Sciatic nerve (tissue), 2 donors: ENCODE measurements at regions of chr2 and their contacts with region 1.

Region 1: GRCh38 chr2:101697124-101698013 is at the start of gene MAP4K4:
- DNase-seq: peak; percentile 92
- ATAC-seq: peak; percentile 92
- total RNA-seq, gene MAP4K4: 140 TPM

Region 2: GRCh38 chr2:101630224-101630949 is 67.0 kb before region 1 on chr2:
- intact Hi-C with region 1: no loop called
- DNase-seq: no peak
- ATAC-seq: no peak

Region 3: GRCh38 chr2:101746388-101746723 is 49.0 kb after region 1 on chr2:
- intact Hi-C with region 1: no loop called
- DNase-seq: no peak
- ATAC-seq: no peak

Region 4: DNA sequence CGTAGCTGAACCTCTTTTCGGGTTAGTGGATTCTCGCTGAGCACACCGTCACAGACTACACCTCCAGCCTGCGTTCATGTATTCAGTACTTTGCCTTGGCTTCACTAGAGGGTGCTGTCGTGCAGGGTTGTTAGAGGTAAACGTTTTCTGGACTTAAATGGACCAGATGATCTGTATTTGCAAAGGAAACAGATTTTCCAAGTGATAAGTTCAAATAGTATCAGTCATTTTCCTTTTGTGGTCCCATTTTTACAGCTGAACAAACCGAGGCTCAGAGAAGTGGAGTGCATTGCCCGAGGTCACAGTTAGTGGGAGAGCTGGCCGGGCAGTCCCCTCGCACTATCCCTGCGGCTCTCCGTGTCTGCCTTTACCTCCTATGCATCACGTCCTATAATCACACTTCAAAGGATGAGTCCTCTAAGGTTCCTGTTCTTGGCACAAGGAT is 126.0 kb after region 1 on chr2:
- intact Hi-C with region 1: loop called (anchors 10 kb)
- DNase-seq: peak; percentile 78
- ATAC-seq: peak; percentile 86

Region 5: DNA sequence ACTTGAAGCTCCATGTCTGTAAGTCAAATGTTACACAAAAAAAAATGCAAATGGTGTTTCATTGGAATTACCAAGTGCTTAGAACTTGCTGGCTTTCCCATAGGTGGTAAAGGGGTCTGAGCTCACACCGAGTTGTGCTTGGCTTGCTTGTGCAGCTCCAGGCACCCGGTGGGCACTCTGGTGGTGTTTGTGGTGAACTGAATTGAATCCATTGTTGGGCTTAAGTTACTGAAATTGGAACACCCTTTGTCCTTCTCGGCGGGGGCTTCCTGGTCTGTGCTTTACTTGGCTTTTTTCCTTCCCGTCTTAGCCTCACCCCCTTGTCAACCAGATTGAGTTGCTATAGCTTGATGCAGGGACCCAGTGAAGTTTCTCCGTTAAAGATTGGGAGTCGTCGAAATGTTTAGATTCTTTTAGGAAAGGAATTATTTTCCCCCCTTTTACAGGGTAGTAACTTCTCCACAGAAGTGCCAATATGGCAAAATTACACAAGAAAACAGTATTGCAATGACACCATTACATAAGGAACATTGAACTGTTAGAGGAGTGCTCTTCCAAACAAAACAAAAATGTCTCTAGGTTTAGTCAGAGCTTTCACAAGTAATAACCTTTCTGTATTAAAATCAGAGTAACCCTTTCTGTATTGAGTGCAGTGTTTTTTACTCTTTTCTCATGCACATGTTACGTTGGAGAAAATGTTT is 196.5 kb after region 1 on chr2:
- intact Hi-C with region 1: no loop called
- DNase-seq: no peak
- ATAC-seq: peak; percentile 67